ENCODE measurements at regions of chr5 and their contacts with region 1.

Region 1: DNA sequence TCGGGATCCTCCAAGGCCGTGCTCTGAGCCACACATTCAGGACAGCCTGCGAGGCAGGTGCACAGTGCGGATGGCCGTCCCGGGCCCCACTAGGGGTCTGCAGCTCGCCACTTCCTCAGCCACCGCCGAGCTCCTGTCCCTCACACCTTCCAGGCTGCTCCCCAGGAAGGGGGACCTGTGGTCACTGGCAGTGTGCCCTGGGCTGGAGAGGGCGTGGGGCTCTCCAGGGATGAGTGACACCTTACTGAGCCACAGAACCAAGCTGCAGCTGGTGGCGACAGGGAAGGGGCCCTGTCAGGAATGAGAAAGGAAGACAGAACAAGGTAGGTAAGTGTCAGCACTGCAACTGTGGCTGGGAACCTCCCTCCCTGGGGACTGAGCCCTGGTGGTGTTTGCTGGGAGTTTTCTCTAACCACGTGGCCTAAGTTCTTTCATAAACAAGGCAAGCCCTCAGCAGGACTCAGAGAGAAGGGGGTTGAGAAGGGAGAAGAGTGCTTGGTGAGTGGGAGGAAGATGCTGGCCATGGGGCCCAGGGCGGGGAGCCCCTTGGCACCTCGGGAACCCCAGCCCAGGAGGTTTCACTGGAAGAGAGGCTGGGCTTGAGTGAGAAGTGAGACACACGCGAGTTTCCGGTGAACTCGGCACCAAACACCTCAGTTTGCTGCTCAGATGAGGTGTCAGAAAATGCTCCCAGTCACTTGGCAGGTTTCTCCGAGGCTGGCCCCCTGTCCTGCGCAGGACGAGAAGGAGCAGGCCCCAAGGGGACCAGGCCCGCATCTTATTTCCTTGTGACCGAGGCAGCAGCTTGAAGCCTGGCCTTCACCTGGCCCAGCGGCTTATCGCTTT is 5.2 kb downstream of the IL13 start:
- DNase-seq: peak; percentile 14 to 58 (median 55)
- H3K4me3 ChIP-seq: peak overlapping the region in 1 of 7 experiments; percentile 21
- H3K27ac ChIP-seq: no peak overlapping the region
- H3K4me1 ChIP-seq: peaks cover 2 to 25% (median 13%) of the 10 kb centered on the region in 4 experiments
- H3K27me3 ChIP-seq: peaks cover 0 to 2% (median 0%) of the 10 kb centered on the region in 5 experiments

Region 2: DNA sequence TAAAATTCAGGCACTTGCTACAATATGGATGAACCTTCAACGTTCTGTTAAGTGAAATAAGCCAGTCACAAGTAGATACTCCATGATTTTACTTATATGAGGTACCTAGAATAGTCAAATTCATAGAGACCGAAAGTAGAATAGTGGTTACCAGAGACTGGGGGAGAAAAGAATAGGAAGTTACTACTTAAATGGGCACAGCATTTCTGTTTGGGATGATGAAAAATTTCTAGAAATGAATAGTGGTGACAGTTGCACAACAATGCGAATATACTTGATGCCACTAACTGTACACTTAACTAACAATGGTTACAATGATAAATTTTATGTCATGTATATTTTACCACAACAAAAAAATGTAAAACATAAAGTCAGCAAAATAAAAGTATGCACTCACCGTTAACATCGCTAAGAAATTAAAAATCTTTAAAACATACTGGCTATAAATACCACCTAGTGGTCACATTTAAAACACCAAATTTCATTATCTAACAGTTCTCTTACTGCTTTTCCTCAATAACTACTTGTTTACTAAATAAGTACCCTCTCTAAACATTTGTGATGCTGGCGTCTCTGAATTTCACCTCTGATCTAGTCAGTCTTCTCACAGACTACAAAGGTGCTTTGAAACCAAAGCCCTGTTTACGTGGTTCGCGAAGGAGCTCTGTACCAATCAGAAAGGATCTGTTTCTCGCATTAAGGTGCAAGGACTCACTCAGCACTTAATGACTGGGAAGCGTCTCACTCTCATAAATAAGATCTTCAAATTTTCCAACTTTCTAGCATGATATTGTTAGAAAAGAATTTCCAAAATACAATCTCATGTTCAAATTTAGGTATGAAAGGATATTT is 51.5 kb after region 1 on chr5:
- CTCF ChIA-PET with region 1: interaction called, 15 read pairs
- POLR2A ChIA-PET with region 1: interaction called, 3 read pairs
- DNase-seq: peak; percentile 20 to 46 (median 39)
- H3K4me3 ChIP-seq: no peak overlapping the region
- H3K27ac ChIP-seq: no peak overlapping the region
- H3K4me1 ChIP-seq: no peaks in the 10 kb centered on the region
- H3K27me3 ChIP-seq: no peaks in the 10 kb centered on the region

Measured in common myeloid progenitor, CD34-positive (primary cell).